H1 (cell line): ENCODE measurements at regions of chr6 and their contacts with region 1.

Region 1: DNA sequence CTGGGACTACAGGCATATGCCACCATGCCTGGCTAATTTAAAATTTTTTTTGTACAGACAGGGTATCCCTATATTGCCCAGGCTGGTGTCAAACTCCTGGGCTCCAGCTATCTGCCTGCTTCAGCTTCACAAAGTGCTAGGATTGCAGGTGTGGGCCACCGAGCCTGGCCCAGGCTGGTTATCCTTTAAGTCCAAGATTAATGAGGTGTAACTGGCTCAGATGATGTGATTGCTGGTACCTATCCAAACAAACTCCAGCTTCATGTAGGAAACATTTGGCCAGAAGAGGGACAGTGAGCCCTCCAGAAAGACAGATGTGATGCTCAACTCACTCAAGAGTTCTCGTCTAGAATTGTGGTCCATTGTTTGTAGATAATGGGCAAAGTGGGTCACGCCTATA is 9.2 kb upstream of the ZNF318 start:
- DNase-seq: no peak
- H3K4me3 ChIP-seq: no peak overlapping the region
- H3K27ac ChIP-seq: no peak overlapping the region
- H3K4me1 ChIP-seq: no peaks in the 10 kb centered on the region
- H3K27me3 ChIP-seq: no peaks in the 10 kb centered on the region
- CTCF ChIP-seq: no peak
- EP300 ChIP-seq: no peak
- POLR2A ChIP-seq: no peak
- RAD21 ChIP-seq: no peak; a peak in 1 of 4 replicates

Region 2: GRCh38 chr6:43318011-43318410 is 60.6 kb before region 1 on chr6:
- CTCF ChIA-PET with region 1: no interaction called
- POLR2A ChIA-PET with region 1: no interaction called
- DNase-seq: no peak
- H3K4me3 ChIP-seq: no peak overlapping the region
- H3K27ac ChIP-seq: no peak overlapping the region
- H3K4me1 ChIP-seq: peaks cover 0 to 3% (median 0%) of the 10 kb centered on the region in 4 experiments; a peak in 3 of 7 replicates
- H3K27me3 ChIP-seq: no peaks in the 10 kb centered on the region
- CTCF ChIP-seq: no peak
- EP300 ChIP-seq: no peak
- POLR2A ChIP-seq: no peak
- RAD21 ChIP-seq: no peak

Region 3: DNA sequence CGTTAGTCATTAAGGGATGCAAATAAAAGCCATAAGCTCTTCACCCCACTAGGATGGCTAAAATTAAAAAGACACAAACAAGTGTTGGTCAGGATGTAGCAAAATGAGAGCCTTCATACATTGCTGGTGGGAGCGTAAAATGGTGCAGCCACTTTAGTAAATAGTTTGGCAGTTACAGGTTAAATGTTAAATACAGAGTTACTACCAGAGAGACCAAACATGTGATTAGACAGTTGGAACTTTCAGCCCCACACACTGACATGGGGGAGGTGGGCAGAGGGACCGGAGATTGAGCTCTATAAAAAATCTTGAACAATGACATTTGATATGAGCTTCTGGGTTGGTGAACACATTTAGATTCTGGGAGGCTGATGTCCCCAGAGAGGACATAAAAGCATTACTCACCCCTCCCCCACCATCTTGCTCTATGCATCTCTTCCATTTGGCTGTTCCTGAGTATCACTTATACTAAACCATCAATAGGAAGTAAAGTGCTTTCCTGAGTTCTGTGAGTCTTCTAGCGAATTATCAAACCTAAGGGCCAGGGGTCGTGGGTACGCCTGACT is 11.2 kb after region 1 on chr6:
- CTCF ChIA-PET with region 1: interaction called, 12 read pairs
- POLR2A ChIA-PET with region 1: interaction called, 3 read pairs
- DNase-seq: no peak
- H3K4me3 ChIP-seq: no peak overlapping the region
- H3K27ac ChIP-seq: no peak overlapping the region
- H3K4me1 ChIP-seq: no peaks in the 10 kb centered on the region
- H3K27me3 ChIP-seq: no peaks in the 10 kb centered on the region; a peak in 2 of 7 replicates
- CTCF ChIP-seq: no peak
- EP300 ChIP-seq: no peak
- POLR2A ChIP-seq: no peak
- RAD21 ChIP-seq: no peak